ENCODE measurements at regions of chr1 and their contacts with region 1.

Region 1: DNA sequence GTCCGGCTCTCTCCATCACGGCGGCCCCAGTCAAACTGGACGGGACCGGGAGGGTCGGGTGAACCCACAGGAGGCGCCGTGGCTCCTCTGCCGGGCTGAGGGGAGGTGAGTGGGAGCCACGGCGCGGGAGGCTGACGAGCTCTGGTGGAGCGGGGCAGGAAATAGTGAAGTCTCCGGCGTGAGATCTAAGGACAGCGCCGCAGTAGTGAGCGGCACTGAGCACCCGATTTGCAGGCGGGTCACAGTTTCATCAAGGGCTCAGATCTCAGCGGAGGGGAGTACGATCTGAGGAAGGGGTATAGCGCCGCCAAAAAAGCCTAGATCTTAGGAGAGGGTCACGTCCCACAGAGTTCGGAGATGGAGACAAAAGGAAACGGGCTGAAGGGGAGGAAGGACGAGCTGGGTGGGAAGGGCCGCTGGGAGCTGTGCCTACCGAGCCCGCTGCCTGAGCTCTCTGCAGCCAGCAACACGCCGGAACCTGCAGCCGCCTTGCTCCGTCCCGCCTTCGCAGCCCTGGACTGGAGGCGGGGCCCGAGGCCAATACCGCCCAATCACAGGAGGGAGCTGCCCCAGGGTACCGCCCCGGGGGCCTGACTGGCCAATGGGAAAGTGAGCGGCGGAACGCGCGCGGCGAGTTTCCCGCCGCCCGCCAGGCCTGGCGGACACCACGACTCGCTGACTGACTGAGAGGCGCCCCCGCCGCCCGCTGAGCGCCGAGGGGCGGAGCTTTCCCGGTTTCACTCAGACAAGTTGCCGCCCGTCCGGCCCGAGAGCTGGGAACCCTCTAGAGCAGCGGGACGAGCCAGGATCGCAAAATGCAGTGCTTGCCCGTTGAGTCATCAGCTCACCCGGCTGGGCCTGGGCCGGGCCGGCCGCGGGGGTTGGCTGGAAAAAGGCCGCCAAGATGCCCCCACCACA is 1.9 kb downstream of the SFN start:
- DNase-seq: peak; percentile 91
- ATAC-seq: peak; percentile 96
- H3K4me3 ChIP-seq: peak overlapping the region; percentile 93
- H3K27ac ChIP-seq: peak overlapping the region; percentile 99
- H3K4me1 ChIP-seq: peaks cover 16% of the 10 kb centered on the region
- H3K27me3 ChIP-seq: no peaks in the 10 kb centered on the region
- CTCF ChIP-seq: no peak
- EP300 ChIP-seq: 0 out of 4 replicates have a peak, but pooled peaks of 1 of the 2 experiments have one; percentile 18
- POLR2A ChIP-seq: peak; percentile 98
- RAD21 ChIP-seq: no peak

Region 2: GRCh38 chr1:26630634-26631033 is 234.2 kb before region 1 on chr1:
- CTCF ChIA-PET with region 1: no interaction called
- POLR2A ChIA-PET with region 1: no interaction called
- RAD21 ChIA-PET with region 1: no interaction called
- SMC1A ChIA-PET with region 1: no interaction called
- in situ Hi-C with region 1: no loop called
- intact Hi-C with region 1: no loop called
- DNase-seq: no peak
- ATAC-seq: no peak
- H3K4me3 ChIP-seq: no peak overlapping the region
- H3K27ac ChIP-seq: no peak overlapping the region
- H3K4me1 ChIP-seq: peaks cover 19% of the 10 kb centered on the region
- H3K27me3 ChIP-seq: no peaks in the 10 kb centered on the region
- CTCF ChIP-seq: no peak
- EP300 ChIP-seq: no peak
- POLR2A ChIP-seq: no peak
- RAD21 ChIP-seq: no peak

Region 3: DNA sequence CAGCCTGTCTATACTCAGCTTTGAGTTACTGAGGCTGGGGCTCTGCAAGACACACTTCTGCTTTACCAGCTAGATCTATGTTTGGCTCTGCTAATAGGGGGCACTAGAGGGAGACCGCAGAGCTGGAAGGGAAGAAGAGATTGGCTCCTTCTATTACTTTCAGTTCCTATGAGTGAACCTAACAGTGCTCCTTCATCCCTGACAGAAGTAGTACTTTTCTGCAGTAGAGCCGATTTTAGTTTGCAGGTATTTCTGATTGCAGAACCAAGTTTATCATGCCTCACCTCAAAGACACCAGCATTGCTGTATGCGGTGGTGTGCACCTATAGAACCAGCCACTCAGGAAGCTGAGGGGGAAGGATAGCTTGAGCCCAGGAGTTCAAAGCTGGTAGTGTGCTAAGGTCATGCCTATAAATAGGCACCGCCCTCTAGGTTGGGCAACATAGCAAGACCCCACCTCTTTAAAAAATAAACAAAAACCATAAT is 44.0 kb before region 1 on chr1:
- CTCF ChIA-PET with region 1: interaction called, 15 read pairs
- POLR2A ChIA-PET with region 1: interaction called, 5 read pairs
- RAD21 ChIA-PET with region 1: interaction called, 17 read pairs
- SMC1A ChIA-PET with region 1: interaction called, 4 read pairs
- in situ Hi-C with region 1: no loop called
- intact Hi-C with region 1: loop called (anchors 5 kb)
- DNase-seq: peak; percentile 77
- ATAC-seq: peak; percentile 100
- H3K4me3 ChIP-seq: no peak overlapping the region
- H3K27ac ChIP-seq: peak overlapping the region; percentile 23
- H3K4me1 ChIP-seq: peaks cover 11% of the 10 kb centered on the region
- H3K27me3 ChIP-seq: no peaks in the 10 kb centered on the region
- CTCF ChIP-seq: peak; percentile 65 to 68 (median 67)
- EP300 ChIP-seq: peak in 1 of 2 experiments; percentile 45; a peak in 1 of 4 replicates
- POLR2A ChIP-seq: no peak
- RAD21 ChIP-seq: peak; percentile 42

Region 4: GRCh38 chr1:26833432-26834405 is 31.1 kb before region 1 on chr1:
- CTCF ChIA-PET with region 1: interaction called, 36 read pairs
- POLR2A ChIA-PET with region 1: interaction called, 56 read pairs
- RAD21 ChIA-PET with region 1: interaction called, 28 read pairs
- SMC1A ChIA-PET with region 1: interaction called, 15 read pairs
- in situ Hi-C with region 1: no loop called
- intact Hi-C with region 1: loop called (anchors 5 kb)
- DNase-seq: peak; percentile 88
- ATAC-seq: peak; percentile 88
- H3K4me3 ChIP-seq: peak overlapping the region; percentile 56; the same call in 1 of the 2 replicates
- H3K27ac ChIP-seq: peak overlapping the region; percentile 99
- H3K4me1 ChIP-seq: peaks cover 40% of the 10 kb centered on the region
- H3K27me3 ChIP-seq: no peaks in the 10 kb centered on the region
- CTCF ChIP-seq: peak; percentile 40 to 54 (median 46); a peak in 5 of 6 replicates
- EP300 ChIP-seq: no peak; a peak in 1 of 4 replicates
- POLR2A ChIP-seq: peak; percentile 84
- RAD21 ChIP-seq: peak; percentile 69

Region 5: DNA sequence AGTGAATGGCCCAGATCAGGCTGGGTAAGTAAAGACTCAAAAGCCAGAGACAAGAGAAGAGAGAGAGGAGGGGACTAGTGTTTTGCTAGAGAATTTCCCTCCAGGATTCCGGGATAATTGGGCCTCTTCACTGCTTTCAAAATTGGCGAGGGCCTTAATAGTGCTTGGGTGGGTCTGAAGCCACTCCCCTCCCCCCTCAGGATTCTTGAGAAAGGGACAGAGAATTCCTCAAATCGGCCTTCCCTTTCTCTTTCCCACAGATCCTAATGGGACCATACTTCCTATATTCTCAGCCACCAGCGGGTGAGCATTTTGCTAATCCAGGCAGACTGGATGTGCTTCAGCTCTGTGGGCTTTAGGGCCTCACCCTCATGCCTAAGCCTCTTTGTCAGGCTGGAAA is 10.0 kb after region 1 on chr1:
- CTCF ChIA-PET with region 1: interaction called, 29 read pairs
- POLR2A ChIA-PET with region 1: interaction called, 3 read pairs
- RAD21 ChIA-PET with region 1: interaction called, 5 read pairs
- SMC1A ChIA-PET with region 1: interaction called, 14 read pairs
- in situ Hi-C with region 1: no loop called
- intact Hi-C with region 1: no loop called
- DNase-seq: no peak
- ATAC-seq: no peak
- H3K4me3 ChIP-seq: no peak overlapping the region
- H3K27ac ChIP-seq: no peak overlapping the region
- H3K4me1 ChIP-seq: no peaks in the 10 kb centered on the region
- H3K27me3 ChIP-seq: no peaks in the 10 kb centered on the region
- CTCF ChIP-seq: no peak
- EP300 ChIP-seq: no peak
- POLR2A ChIP-seq: no peak
- RAD21 ChIP-seq: no peak

Region 6: GRCh38 chr1:26889551-26890466 is 24.9 kb after region 1 on chr1 and contains the start of gene GPN2:
- CTCF ChIA-PET with region 1: interaction called, 13 read pairs
- POLR2A ChIA-PET with region 1: interaction called, 11 read pairs
- RAD21 ChIA-PET with region 1: interaction called, 5 read pairs
- SMC1A ChIA-PET with region 1: interaction called, 3 read pairs
- in situ Hi-C with region 1: no loop called
- intact Hi-C with region 1: no loop called
- DNase-seq: peak; percentile 46
- ATAC-seq: peak; percentile 98
- H3K4me3 ChIP-seq: peak within 1 kb of the TSS; percentile 96
- H3K27ac ChIP-seq: peak within 1 kb of the TSS; percentile 82
- H3K4me1 ChIP-seq: peaks cover 9% of the 10 kb centered on the region
- H3K27me3 ChIP-seq: no peaks in the 10 kb centered on the region
- CTCF ChIP-seq: no peak
- EP300 ChIP-seq: no peak; a peak in 1 of 4 replicates
- POLR2A ChIP-seq: peak; percentile 94
- RAD21 ChIP-seq: no peak
- polyA plus RNA-seq, gene GPN2: 8.3 to 17.4 TPM

Region 7: GRCh38 chr1:27087371-27088220 is 222.7 kb after region 1 on chr1:
- CTCF ChIA-PET with region 1: no interaction called
- POLR2A ChIA-PET with region 1: no interaction called
- RAD21 ChIA-PET with region 1: no interaction called
- SMC1A ChIA-PET with region 1: no interaction called
- in situ Hi-C with region 1: no loop called
- intact Hi-C with region 1: no loop called
- DNase-seq: no peak
- ATAC-seq: no peak
- H3K4me3 ChIP-seq: no peak overlapping the region
- H3K27ac ChIP-seq: no peak overlapping the region
- H3K4me1 ChIP-seq: no peaks in the 10 kb centered on the region
- H3K27me3 ChIP-seq: 0 out of 4 replicates have a peak, but pooled peaks cover 0 to 2% of the 10 kb centered on the region in 2 experiments
- CTCF ChIP-seq: no peak
- EP300 ChIP-seq: no peak
- POLR2A ChIP-seq: no peak
- RAD21 ChIP-seq: no peak